ENCODE measurements at regions of chr1 and their contacts with region 1.

Region 1: DNA sequence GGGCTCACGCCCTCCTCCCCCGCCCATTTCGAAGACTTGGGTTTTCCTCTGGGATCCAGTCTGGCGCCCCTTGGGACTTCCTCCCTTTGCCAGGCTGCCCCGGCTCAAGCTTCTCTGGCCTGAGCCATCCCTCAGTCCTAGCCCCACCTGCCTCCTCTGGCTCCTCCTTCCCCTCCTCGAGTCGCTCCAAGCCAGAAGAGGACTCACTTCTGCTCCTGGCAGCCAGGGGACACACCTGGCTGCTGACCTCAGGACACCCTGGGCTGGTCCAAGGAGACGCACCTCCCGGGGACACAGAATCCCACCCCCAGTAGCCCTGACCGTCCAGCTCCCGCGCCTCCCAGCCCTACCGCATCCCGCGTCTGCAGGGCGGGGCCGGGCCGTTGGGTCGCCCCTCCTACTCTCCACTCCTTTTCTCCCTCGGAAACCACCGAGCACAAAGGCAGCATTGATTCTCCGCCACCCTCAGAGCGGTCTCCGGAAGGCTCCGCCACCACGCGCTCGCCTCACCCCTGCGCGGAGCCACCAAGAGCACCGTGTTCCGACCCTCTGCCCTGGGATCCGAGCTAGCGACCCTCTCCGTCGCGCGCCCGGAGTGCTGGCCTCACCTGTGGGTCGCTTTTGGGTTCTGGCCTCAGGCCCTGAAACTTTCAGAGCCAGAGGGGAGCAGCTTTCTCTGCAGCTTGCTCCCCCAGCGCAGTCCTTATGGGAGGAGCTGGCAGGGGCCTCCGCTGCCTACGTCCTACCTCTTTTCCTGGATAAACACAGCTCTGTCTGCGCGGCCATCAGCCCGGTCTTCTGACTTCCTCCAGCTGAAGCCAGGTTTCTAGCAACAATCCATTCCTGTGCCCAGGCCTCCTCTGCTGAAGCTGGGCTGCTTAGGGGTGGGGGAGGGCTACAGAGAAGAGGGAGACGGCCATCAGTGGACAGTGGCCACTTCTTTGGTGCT is at the start of gene C2CD4D:
- DNase-seq: peak; percentile 83
- H3K4me3 Mint-ChIP-seq: peak within 1 kb of the TSS; percentile 88
- H3K27ac Mint-ChIP-seq: peak within 1 kb of the TSS; percentile 83
- H3K4me1 Mint-ChIP-seq: peaks cover 34% of the 10 kb centered on the region
- H3K27me3 Mint-ChIP-seq: no peaks in the 10 kb centered on the region
- total RNA-seq, gene C2CD4D: 2.3 to 2.7 TPM

Region 2: DNA sequence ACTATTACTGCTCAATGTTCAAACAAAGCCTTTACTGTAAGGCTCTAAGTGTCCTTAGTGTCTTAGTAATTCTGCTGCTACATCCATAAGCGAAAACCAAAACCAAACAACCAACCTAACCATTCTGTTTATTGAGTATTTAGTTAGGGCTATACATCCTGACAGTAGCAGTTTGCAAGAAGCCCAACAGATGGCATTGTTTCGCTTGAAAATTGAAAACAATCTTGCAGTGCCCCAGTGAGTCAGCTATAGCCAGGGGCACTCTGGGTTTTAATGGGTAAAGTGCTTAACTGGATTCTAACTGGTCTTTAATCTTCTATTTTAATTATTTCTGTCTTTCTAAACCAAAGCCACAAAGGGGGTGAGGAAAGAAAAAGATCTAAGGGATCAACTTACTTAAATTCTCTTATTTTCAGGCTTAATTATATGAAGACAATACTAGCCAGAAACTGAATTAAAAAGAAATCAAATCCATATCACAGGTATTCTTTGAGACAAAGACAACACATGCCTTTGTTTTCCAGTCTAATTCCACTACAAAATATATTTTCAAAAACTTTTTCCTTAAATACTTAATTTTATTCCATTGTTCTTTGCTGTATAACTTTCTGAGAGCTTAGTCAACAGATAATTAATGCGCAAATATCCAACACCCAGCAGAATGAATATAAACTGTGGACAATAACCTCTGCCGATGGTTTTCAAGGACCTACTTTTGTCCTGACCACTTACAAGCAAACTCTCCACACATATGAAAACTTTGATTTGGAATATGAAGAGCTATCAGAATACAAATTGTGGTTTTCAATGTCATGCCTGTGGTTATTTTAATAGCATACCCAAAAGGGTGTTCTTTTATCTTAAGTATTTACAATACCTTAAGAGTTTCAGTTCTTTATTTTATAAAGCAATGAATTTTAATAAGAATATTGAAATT is 395.6 kb before region 1 on chr1:
- CTCF ChIA-PET with region 1: no interaction called
- intact Hi-C with region 1: loop called (anchors 5 kb)
- DNase-seq: peak; percentile 85
- H3K4me3 Mint-ChIP-seq: no peak overlapping the region
- H3K27ac Mint-ChIP-seq: no peak overlapping the region
- H3K4me1 Mint-ChIP-seq: peaks cover 53% of the 10 kb centered on the region
- H3K27me3 Mint-ChIP-seq: no peaks in the 10 kb centered on the region

Region 3: GRCh38 chr1:151594143-151594625 is 245.5 kb before region 1 on chr1:
- CTCF ChIA-PET with region 1: interaction called, 13 read pairs
- intact Hi-C with region 1: loop called (anchors 1 kb)
- DNase-seq: peak; percentile 94
- H3K4me3 Mint-ChIP-seq: peak overlapping the region; percentile 50
- H3K27ac Mint-ChIP-seq: no peak overlapping the region
- H3K4me1 Mint-ChIP-seq: peaks cover 10% of the 10 kb centered on the region
- H3K27me3 Mint-ChIP-seq: no peaks in the 10 kb centered on the region

Region 4: DNA sequence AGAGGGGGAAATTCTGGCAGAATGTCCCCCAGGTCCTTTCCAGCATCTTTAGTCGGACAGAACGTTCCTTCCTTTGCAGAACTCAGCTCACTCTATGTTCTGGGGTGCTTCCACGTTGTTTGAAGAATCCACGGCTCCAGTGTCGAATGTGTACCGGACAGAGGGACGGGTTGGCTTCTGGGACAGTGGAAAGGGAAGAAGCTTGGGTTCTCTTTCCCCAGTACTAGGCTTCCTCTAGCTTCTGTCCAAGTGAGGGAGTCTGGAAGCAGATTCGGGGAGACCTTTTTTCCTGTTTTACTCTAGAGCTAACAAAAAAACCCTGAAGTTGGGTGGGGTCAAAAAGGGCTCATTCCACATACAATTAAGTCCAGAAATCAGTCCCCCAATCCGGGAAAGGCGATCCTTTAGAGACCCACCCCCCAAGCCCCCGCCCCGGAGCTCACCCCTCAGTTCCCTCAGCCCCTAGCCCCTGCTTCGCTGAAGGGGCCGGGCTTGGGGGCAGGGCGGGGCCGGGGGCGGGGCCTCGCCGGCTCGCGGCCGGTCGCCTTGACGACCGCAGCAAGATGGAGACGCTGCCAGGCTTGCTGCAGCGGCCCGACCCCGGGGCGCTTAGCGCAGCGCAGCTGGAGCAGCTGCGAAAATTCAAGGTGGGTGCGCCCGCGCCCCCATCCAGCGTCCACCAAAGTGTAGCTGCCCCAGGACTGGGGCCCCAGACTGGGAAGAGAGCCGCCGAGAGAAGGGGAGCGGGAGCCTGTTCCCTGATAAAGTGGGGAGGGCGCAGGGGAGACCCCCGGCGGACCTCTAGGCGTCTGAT is 118.5 kb before region 1 on chr1 and contains the start of gene RIIAD1:
- CTCF ChIA-PET with region 1: no interaction called
- intact Hi-C with region 1: loop called (anchors 5 kb)
- DNase-seq: peak; percentile 31
- H3K4me3 Mint-ChIP-seq: peak within 1 kb of the TSS; percentile 69
- H3K27ac Mint-ChIP-seq: no peak within 1 kb of the TSS
- H3K4me1 Mint-ChIP-seq: peaks cover 19% of the 10 kb centered on the region
- H3K27me3 Mint-ChIP-seq: peaks cover 57% of the 10 kb centered on the region
- total RNA-seq, gene RIIAD1: not detected

Region 5: DNA sequence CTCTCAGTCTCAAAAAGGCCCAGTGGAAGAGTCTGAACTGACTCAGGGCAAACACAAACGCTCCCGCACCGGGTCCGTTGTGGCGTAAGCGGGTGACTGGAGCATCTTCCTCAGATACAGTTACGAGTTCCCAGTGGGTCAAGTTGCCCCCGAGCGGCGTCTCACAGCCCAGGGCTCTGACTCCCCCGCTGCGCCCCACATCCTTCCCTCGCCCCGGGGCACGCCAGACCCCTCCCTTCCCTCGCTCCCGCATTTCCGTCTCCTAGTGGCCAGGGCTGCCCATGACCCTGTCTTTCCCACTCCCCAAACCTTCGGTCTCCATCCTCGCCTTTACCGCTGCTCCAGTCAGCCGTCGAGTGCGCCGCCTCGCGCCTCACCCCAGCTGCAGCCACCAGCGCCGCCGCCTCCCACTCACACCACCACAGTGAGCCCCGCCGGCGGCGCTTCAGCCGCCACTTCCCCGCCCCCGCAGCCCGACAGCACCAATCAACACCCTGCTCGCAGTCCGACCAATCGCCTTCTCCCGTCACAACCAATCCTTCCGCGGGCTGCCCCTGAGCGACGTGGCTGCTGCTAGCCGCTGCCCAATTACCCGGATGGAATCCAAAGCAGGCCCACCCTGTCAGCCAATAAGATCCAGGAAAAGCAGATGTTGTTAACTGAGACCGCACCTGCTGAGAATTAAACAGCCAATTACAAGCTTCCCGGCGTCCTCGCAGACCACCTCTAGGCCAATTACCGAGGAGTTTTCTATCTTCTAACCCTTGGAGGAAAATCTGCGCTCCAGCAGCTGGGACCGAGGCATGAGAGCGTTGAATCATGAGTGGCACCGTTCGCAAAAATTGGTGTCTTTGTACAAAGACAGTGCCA is 49.4 kb before region 1 on chr1 and contains the start of gene TDRKH:
- CTCF ChIA-PET with region 1: interaction called, 9 read pairs
- intact Hi-C with region 1: loop called (anchors 2 kb)
- DNase-seq: peak; percentile 99
- H3K4me3 Mint-ChIP-seq: peak within 1 kb of the TSS; percentile 98
- H3K27ac Mint-ChIP-seq: peak within 1 kb of the TSS; percentile 81
- H3K4me1 Mint-ChIP-seq: peaks cover 22% of the 10 kb centered on the region
- H3K27me3 Mint-ChIP-seq: no peaks in the 10 kb centered on the region
- total RNA-seq, gene TDRKH: 22.0 to 22.5 TPM